AG04450 (cell line): ENCODE measurements at regions of chr21 and their contacts with region 1.

Region 1: DNA sequence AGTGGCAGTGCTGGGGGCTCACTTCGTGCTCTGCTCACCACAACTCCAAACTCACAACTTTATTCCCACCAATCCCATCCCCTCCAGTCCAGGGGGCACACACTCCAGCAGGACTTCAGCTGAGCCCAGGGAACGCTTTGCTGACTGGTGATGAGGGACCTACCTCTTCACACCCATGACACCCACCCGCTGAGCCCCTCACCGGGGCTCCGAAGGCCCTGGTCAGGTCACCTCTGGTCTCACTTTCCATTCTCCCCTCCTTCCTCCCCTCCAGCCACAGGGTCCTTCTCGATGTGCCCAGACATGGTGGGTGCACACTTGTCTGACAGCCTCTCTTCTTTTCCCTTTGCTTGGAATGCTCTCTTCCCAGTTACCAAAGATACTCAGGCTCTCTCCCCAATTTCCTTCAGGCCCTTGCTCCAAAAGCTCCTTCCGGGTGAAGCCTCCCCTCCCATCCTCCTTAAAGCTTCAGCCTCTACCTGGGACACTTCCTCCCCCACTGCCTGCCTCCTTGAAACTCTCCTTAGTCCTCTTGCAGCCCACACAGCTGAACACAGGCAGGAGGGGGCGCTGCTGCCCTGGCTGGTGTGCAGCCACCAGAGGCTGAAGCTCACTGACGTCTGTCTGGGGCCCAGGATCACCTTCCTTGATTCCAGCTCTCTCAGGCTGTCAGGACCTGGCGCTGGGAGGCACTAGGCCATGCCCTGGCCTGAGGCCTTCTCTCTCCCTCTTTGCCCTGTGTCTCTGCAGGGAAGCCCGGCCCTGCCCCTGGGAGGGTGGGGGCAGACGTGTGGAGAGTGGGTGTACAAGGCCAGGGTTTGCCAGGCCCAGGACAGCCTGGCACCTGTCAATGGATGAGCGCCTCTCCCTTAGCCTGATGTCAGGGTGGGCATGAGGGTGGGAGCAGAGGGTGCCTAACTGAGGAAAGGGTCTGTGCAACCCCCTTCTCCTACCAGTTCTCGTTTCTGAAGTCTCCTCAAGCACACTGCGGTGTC is 1.6 kb downstream of the KCNE1 start:
- DNase-seq: no peak
- H3K4me3 ChIP-seq: no peak overlapping the region
- H3K27ac ChIP-seq: no peak overlapping the region
- H3K27me3 ChIP-seq: no peaks in the 10 kb centered on the region
- CTCF ChIP-seq: peak; percentile 87

Region 2: DNA sequence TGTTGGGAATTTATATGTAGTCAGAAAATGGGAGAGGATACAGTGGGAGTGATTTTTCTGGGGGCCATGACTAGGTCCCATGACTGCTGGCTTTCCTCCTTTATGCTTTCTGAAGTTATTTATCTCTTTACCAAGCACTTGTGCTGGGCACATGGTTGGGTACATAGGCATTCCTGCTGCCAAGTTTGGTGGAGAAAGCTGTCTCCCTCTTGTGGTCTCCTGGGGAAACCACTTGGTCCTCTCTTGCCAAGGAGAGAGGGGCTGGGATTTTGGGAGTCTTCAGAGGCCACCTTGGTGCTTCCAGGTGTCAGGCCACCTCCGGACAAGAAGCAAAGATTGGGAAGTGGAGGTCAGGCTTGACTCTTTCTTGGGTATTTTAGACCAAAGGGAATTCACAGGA is 266.9 kb before region 1 on chr21:
- CTCF ChIA-PET with region 1: no interaction called
- POLR2A ChIA-PET with region 1: no interaction called
- DNase-seq: no peak
- H3K4me3 ChIP-seq: no peak overlapping the region
- H3K27ac ChIP-seq: no peak overlapping the region
- H3K27me3 ChIP-seq: peaks cover 5% of the 10 kb centered on the region
- CTCF ChIP-seq: peak; percentile 59

Region 3: DNA sequence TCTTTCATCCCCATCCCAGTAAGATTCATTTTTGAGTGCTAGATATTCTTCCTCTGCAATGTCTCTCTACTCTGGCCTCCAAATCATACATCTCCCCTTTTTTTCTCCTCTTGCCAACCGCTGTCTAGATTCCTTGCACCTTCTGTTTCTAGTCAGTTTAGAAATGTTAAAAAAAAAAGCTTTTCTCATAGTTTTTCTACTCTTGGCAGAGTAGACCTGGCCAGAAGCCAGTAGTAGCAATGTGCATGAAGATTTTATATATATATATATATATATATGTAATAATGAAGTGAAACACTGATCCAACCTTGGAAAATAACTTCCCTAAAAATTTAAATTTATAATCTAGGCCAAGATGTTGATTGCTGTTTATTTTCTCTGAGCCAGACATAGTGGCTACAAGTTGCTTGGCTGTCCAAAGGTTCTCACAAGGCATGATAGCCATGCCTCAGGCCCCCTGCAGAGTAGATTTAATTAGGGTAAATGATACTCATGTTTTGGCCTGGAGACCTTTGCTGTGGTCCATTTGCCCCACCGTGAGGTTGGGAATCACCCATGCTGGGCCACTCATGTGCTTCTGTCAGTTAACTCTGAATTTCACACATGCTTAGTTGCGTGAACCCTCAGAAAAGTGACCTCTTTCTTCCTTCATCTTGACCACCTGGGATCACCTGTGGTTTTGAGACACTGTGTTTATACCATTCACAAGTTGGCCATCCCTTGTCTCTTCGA is 250.0 kb before region 1 on chr21:
- CTCF ChIA-PET with region 1: no interaction called
- POLR2A ChIA-PET with region 1: no interaction called
- DNase-seq: no peak
- H3K4me3 ChIP-seq: no peak overlapping the region
- H3K27ac ChIP-seq: no peak overlapping the region
- H3K27me3 ChIP-seq: peaks cover 10% of the 10 kb centered on the region
- CTCF ChIP-seq: no peak

Region 4: DNA sequence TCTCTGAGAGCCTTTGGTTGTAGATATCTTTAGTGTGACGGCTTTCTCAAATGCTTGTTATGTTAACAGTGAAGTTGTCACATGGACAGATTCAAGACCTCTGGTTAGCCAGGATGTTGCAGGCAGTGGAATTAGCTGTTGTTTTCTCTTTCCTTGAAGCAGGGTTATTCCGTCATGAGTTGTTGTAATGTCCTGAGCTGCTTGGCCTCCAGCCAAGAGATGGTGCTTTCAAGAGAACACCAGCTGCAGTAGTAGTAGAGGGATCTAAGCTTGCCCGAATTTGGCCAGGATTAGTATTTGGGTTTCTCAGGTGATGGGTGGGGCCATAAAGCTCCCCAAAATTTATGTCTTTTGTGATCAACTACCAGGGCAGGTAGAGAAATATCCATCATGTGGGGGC is 11.8 kb before region 1 on chr21:
- CTCF ChIA-PET with region 1: interaction called, 11 read pairs
- POLR2A ChIA-PET with region 1: no interaction called
- DNase-seq: no peak
- H3K4me3 ChIP-seq: no peak overlapping the region
- H3K27ac ChIP-seq: no peak overlapping the region
- H3K27me3 ChIP-seq: peaks cover 15% of the 10 kb centered on the region
- CTCF ChIP-seq: no peak

Region 5: GRCh38 chr21:34582506-34583150 is 72.2 kb after region 1 on chr21:
- CTCF ChIA-PET with region 1: interaction called, 35 read pairs
- POLR2A ChIA-PET with region 1: interaction called, 11 read pairs
- DNase-seq: peak; percentile 24
- H3K4me3 ChIP-seq: no peak overlapping the region
- H3K27ac ChIP-seq: no peak overlapping the region
- H3K27me3 ChIP-seq: no peaks in the 10 kb centered on the region
- CTCF ChIP-seq: peak; percentile 71

Region 6: GRCh38 chr21:34630536-34631143 is 120.2 kb after region 1 on chr21:
- CTCF ChIA-PET with region 1: interaction called, 19 read pairs
- POLR2A ChIA-PET with region 1: no interaction called
- DNase-seq: no peak
- H3K4me3 ChIP-seq: no peak overlapping the region
- H3K27ac ChIP-seq: no peak overlapping the region
- H3K27me3 ChIP-seq: peaks cover 39% of the 10 kb centered on the region
- CTCF ChIP-seq: peak; percentile 82